K562 (cell line): ENCODE measurements at regions of chr6 and their contacts with region 1.

Region 1: GRCh38 chr6:26156076-26156849 is 69.0 kb downstream of the HFE start:
- DNase-seq: peak; percentile 96 to 97 (median 97)
- ATAC-seq: peak; percentile 78
- H3K4me3 ChIP-seq: peak overlapping the region; percentile 65
- H3K27ac ChIP-seq: peak overlapping the region; percentile 85
- H3K4me1 ChIP-seq: peaks cover 12 to 18% of the 10 kb centered on the region in 2 experiments; a peak in 4 of 5 replicates
- H3K27me3 ChIP-seq: no peaks in the 10 kb centered on the region
- CTCF ChIP-seq: no peak
- EP300 ChIP-seq: peak; percentile 29
- POLR2A ChIP-seq: peak; percentile 100
- RAD21 ChIP-seq: 0 out of 4 replicates have a peak, but pooled peaks of 1 of the 2 experiments have one; percentile 21

Region 2: DNA sequence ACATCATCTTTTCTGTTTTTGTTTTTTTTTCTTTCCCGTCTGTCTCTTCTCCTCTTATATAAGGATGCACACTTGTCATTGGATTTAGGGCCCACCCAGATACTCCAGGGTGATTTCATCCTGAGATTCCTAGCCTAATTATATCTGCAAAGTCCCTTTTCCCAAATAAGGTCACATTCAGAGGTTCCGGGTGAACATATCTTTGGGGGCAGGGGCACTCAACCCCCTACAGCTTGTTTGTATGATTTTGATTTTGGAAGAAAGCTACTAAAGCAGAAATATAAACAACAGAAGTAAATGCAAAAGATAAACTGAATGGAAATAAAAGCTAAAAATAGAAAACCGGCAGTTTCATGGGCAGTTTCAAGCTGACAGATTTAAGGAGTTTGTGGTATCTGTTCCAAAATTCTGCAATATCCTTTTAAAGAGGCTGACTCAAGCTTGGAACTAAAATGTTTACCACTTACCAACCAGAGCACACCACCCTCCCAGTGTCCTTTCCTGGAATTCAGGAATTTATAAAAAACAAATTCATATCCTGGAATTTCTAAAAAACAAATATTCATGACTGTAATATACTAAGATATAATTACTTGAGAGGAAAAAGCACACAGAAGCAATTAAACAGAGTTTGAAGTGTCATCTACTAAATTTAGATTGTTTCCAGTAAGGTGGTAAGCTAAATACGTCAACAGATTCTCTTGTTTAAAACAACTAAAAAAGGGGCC is 977.0 kb before region 1 on chr6:
- CTCF ChIA-PET with region 1: no interaction called
- POLR2A ChIA-PET with region 1: no interaction called
- in situ Hi-C with region 1: no loop called
- intact Hi-C with region 1: no loop called
- DNase-seq: no peak
- ATAC-seq: no peak
- H3K4me3 ChIP-seq: no peak overlapping the region
- H3K27ac ChIP-seq: no peak overlapping the region
- H3K4me1 ChIP-seq: no peaks in the 10 kb centered on the region
- H3K27me3 ChIP-seq: peaks cover 4 to 7% of the 10 kb centered on the region in 2 experiments; a peak in 4 of 5 replicates
- CTCF ChIP-seq: no peak
- EP300 ChIP-seq: no peak
- POLR2A ChIP-seq: no peak
- RAD21 ChIP-seq: no peak

Region 3: GRCh38 chr6:25413207-25413905 is 742.9 kb before region 1 on chr6:
- CTCF ChIA-PET with region 1: no interaction called
- POLR2A ChIA-PET with region 1: no interaction called
- in situ Hi-C with region 1: no loop called
- intact Hi-C with region 1: no loop called
- DNase-seq: no peak
- ATAC-seq: no peak
- H3K4me3 ChIP-seq: no peak overlapping the region
- H3K27ac ChIP-seq: no peak overlapping the region
- H3K4me1 ChIP-seq: no peaks in the 10 kb centered on the region
- H3K27me3 ChIP-seq: no peaks in the 10 kb centered on the region
- CTCF ChIP-seq: no peak
- EP300 ChIP-seq: no peak
- POLR2A ChIP-seq: no peak
- RAD21 ChIP-seq: no peak

Region 4: GRCh38 chr6:26087284-26088115 is 68.8 kb before region 1 on chr6 and contains the start of gene HFE:
- CTCF ChIA-PET with region 1: no interaction called
- POLR2A ChIA-PET with region 1: interaction called, 21 read pairs
- in situ Hi-C with region 1: no loop called
- intact Hi-C with region 1: no loop called
- DNase-seq: peak; percentile 59 to 75 (median 66)
- ATAC-seq: peak; percentile 92
- H3K4me3 ChIP-seq: peak within 1 kb of the TSS; percentile 56
- H3K27ac ChIP-seq: peak within 1 kb of the TSS; percentile 67
- H3K4me1 ChIP-seq: peaks cover 9% of the 10 kb centered on the region in 2 experiments; a peak in 4 of 5 replicates
- H3K27me3 ChIP-seq: no peaks in the 10 kb centered on the region
- CTCF ChIP-seq: peak in 1 of 3 experiments; percentile 2; a peak in 1 of 6 replicates
- EP300 ChIP-seq: no peak
- POLR2A ChIP-seq: peak; percentile 56; the same call in 1 of the 2 replicates
- RAD21 ChIP-seq: 0 out of 4 replicates have a peak, but pooled peaks of 1 of the 2 experiments have one; percentile 1
- polyA plus RNA-seq, gene HFE: 0.17 to 0.31 TPM

Region 5: DNA sequence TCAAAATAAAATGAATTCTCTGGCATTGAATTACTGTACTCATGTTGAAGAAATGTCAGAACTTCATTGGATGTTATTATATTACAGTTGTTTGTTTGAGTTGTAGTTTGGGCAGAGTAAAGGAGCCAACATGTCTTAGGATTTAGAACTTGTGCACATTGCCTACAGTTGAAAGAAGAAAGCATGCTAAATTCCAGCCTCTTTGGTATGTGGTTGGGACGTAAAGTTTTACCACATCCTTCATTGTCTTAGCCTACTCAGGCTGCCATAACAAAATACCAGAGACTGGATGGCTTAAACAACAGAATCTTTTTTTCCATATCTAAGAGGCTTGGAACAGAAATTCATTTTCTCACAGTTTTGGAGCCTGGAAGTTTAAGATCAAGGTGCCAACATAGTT is 26.6 kb before region 1 on chr6:
- CTCF ChIA-PET with region 1: no interaction called
- POLR2A ChIA-PET with region 1: interaction called, 465 read pairs
- in situ Hi-C with region 1: no loop called
- intact Hi-C with region 1: loop called (anchors 1 kb)
- DNase-seq: no peak
- ATAC-seq: no peak
- H3K4me3 ChIP-seq: no peak overlapping the region
- H3K27ac ChIP-seq: no peak overlapping the region
- H3K4me1 ChIP-seq: peaks cover 3 to 32% of the 10 kb centered on the region in 2 experiments; a peak in 3 of 5 replicates
- H3K27me3 ChIP-seq: no peaks in the 10 kb centered on the region
- CTCF ChIP-seq: no peak
- EP300 ChIP-seq: no peak
- POLR2A ChIP-seq: no peak
- RAD21 ChIP-seq: no peak

Region 6: GRCh38 chr6:26183581-26184366 is 27.5 kb after region 1 on chr6:
- CTCF ChIA-PET with region 1: interaction called, 3 read pairs
- POLR2A ChIA-PET with region 1: interaction called, 97 read pairs
- in situ Hi-C with region 1: no loop called
- intact Hi-C with region 1: no loop called
- DNase-seq: no peak
- ATAC-seq: no peak
- H3K4me3 ChIP-seq: no peak overlapping the region
- H3K27ac ChIP-seq: no peak overlapping the region
- H3K4me1 ChIP-seq: peaks cover 0 to 18% of the 10 kb centered on the region in 2 experiments; a peak in 4 of 5 replicates
- H3K27me3 ChIP-seq: no peaks in the 10 kb centered on the region
- CTCF ChIP-seq: no peak
- EP300 ChIP-seq: no peak
- POLR2A ChIP-seq: no peak
- RAD21 ChIP-seq: no peak

Region 7: GRCh38 chr6:26568601-26569432 is 412.6 kb after region 1 on chr6:
- CTCF ChIA-PET with region 1: interaction called, 4 read pairs
- POLR2A ChIA-PET with region 1: interaction called, 13 read pairs
- in situ Hi-C with region 1: no loop called
- intact Hi-C with region 1: no loop called
- DNase-seq: peak; percentile 82 to 96 (median 84)
- ATAC-seq: peak; percentile 75
- H3K4me3 ChIP-seq: peak overlapping the region; percentile 75
- H3K27ac ChIP-seq: peak overlapping the region; percentile 92
- H3K4me1 ChIP-seq: peaks cover 3 to 8% of the 10 kb centered on the region in 2 experiments; a peak in 2 of 5 replicates
- H3K27me3 ChIP-seq: no peaks in the 10 kb centered on the region
- CTCF ChIP-seq: peak; percentile 80 to 83 (median 81)
- EP300 ChIP-seq: peak; percentile 76
- POLR2A ChIP-seq: peak; percentile 24; the same call in 1 of the 2 replicates
- RAD21 ChIP-seq: peak; percentile 88 to 90

Region 8: GRCh38 chr6:27146706-27147505 is 990.6 kb after region 1 on chr6:
- CTCF ChIA-PET with region 1: no interaction called
- POLR2A ChIA-PET with region 1: interaction called, 27 read pairs
- in situ Hi-C with region 1: no loop called
- intact Hi-C with region 1: loop called (anchors 2 kb)
- DNase-seq: peak; percentile 93 to 99 (median 98)
- ATAC-seq: peak; percentile 68
- H3K4me3 ChIP-seq: peak overlapping the region; percentile 71
- H3K27ac ChIP-seq: peak overlapping the region; percentile 94
- H3K4me1 ChIP-seq: peaks cover 4 to 13% of the 10 kb centered on the region in 2 experiments
- H3K27me3 ChIP-seq: no peaks in the 10 kb centered on the region
- CTCF ChIP-seq: no peak
- EP300 ChIP-seq: no peak; the same call in 1 of the 2 replicates
- POLR2A ChIP-seq: peak; percentile 100
- RAD21 ChIP-seq: no peak; a peak in 1 of 4 replicates